ENCODE measurements at regions of chr10 and their contacts with region 1.

Region 1: DNA sequence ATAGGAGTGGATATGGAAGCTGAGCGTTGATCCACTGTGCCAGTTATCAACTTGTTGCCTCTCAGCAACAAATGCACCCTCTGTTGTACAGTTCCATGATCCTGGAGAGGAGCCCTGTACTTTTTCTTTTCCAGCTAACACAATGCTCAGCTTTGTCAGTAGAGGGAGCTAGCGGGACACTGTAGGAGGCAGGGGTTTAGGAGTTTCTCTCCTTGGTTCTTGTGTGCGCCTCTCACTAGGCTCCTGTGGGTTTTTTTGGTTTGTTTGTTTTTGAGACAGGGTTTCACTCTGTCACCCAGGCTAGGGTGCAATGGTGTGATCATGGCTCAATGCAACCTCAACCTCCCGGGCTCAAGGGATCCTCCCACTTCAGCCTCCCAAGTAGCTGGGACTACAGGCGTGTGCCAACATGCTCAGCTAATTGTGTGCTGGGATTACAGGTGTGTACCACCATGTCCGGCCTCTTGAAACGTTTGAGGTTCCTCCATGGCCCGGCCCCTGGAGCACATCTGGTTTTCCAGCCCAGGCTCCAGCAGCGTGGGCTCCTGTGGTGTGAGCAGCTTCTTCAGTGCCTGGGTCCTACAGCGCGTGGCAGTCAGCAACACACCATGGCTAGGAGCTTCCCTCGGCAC is 12.0 kb upstream of the MARVELD1 start:
- H3K4me3 ChIP-seq: no peak overlapping the region
- H3K27ac ChIP-seq: no peak overlapping the region
- H3K4me1 ChIP-seq: no peaks in the 10 kb centered on the region
- CTCF ChIP-seq: peak; percentile 82

Region 2: DNA sequence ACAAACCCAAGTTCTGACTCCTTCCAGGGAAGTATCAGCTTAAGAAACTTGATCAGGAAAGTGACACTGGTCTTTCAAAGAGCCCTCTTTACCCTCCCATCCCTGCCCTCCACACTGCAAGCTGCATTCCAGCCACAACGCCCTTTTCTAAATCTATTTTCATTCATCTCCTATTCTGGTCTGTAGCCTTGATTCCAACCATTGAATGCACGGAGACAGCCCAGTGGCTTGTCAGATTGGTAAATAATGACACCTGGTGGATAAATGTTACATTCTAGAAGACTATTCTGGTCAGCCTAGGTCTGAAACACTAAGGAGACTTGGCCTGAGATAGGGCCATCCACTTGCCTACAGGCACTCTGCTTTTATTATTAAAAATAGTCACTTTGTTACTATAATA is 89.2 kb before region 1 on chr10:
- CTCF ChIA-PET with region 1: no interaction called
- POLR2A ChIA-PET with region 1: no interaction called
- H3K4me3 ChIP-seq: no peak overlapping the region
- H3K27ac ChIP-seq: no peak overlapping the region
- H3K4me1 ChIP-seq: no peaks in the 10 kb centered on the region
- CTCF ChIP-seq: peak; percentile 70; the same call in 1 of the 2 replicates

Region 3: GRCh38 chr10:97731346-97732051 is 29.9 kb after region 1 on chr10:
- CTCF ChIA-PET with region 1: interaction called, 487 read pairs
- POLR2A ChIA-PET with region 1: interaction called, 6 read pairs
- H3K4me3 ChIP-seq: no peak overlapping the region
- H3K27ac ChIP-seq: no peak overlapping the region
- H3K4me1 ChIP-seq: no peaks in the 10 kb centered on the region
- CTCF ChIP-seq: peak; percentile 82

Region 4: GRCh38 chr10:97904018-97904381 is 202.4 kb after region 1 on chr10:
- CTCF ChIA-PET with region 1: no interaction called
- POLR2A ChIA-PET with region 1: no interaction called
- H3K4me3 ChIP-seq: no peak overlapping the region
- H3K27ac ChIP-seq: no peak overlapping the region
- H3K4me1 ChIP-seq: no peaks in the 10 kb centered on the region; the same call in 1 of the 2 replicates
- CTCF ChIP-seq: no peak